ENCODE measurements at regions of chr1 and their contacts with region 1.

Region 1: GRCh38 chr1:193558491-193559028 is 372.1 kb upstream of the B3GALT2 start:
- DNase-seq: no peak
- H3K4me3 Mint-ChIP-seq: no peak overlapping the region
- H3K27ac Mint-ChIP-seq: peak overlapping the region; percentile 69
- H3K4me1 Mint-ChIP-seq: peaks cover 8% of the 10 kb centered on the region
- H3K27me3 Mint-ChIP-seq: no peaks in the 10 kb centered on the region

Region 2: GRCh38 chr1:193406901-193407300 is 151.7 kb before region 1 on chr1:
- intact Hi-C with region 1: loop called (anchors 1 kb)
- DNase-seq: peak; percentile 70
- H3K4me3 Mint-ChIP-seq: no peak overlapping the region
- H3K27ac Mint-ChIP-seq: no peak overlapping the region
- H3K4me1 Mint-ChIP-seq: peaks cover 23% of the 10 kb centered on the region
- H3K27me3 Mint-ChIP-seq: no peaks in the 10 kb centered on the region

Region 3: GRCh38 chr1:193569096-193569982 is 10.8 kb after region 1 on chr1:
- intact Hi-C with region 1: loop called (anchors 1 kb)
- DNase-seq: peak; percentile 78
- H3K4me3 Mint-ChIP-seq: peak overlapping the region; percentile 4
- H3K27ac Mint-ChIP-seq: peak overlapping the region; percentile 84
- H3K4me1 Mint-ChIP-seq: peaks cover 20% of the 10 kb centered on the region
- H3K27me3 Mint-ChIP-seq: no peaks in the 10 kb centered on the region